ENCODE measurements at regions of chr6 and their contacts with region 1.

Region 1: GRCh38 chr6:110039364-110039980 is 61.4 kb downstream of the GPR6 start:
- DNase-seq: peak; percentile 92
- H3K4me3 ChIP-seq: peak overlapping the region in 1 of 3 experiments; percentile 14
- H3K27ac ChIP-seq: no peak overlapping the region
- H3K4me1 ChIP-seq: no peaks in the 10 kb centered on the region
- H3K27me3 ChIP-seq: peaks cover 4% of the 10 kb centered on the region in 2 experiments
- CTCF ChIP-seq: peak; percentile 84 to 89
- POLR2A ChIP-seq: no peak

Region 2: GRCh38 chr6:109595998-109596397 is 443.5 kb before region 1 on chr6:
- CTCF ChIA-PET with region 1: interaction called, 59 read pairs
- POLR2A ChIA-PET with region 1: no interaction called
- dilution Hi-C with region 1: no loop called
- intact Hi-C with region 1: loop called (anchors 1 kb)
- DNase-seq: peak; percentile 50
- H3K4me3 ChIP-seq: no peak overlapping the region
- H3K27ac ChIP-seq: no peak overlapping the region
- H3K4me1 ChIP-seq: no peaks in the 10 kb centered on the region
- H3K27me3 ChIP-seq: no peaks in the 10 kb centered on the region
- CTCF ChIP-seq: peak in 1 of 2 donors; percentile 51
- POLR2A ChIP-seq: no peak

Region 3: GRCh38 chr6:109705258-109705657 is 334.2 kb before region 1 on chr6:
- CTCF ChIA-PET with region 1: interaction called, 449 read pairs
- POLR2A ChIA-PET with region 1: interaction called, 5 read pairs
- dilution Hi-C with region 1: no loop called
- intact Hi-C with region 1: loop called (anchors 1 kb)
- DNase-seq: peak; percentile 90
- H3K4me3 ChIP-seq: no peak overlapping the region
- H3K27ac ChIP-seq: no peak overlapping the region
- H3K4me1 ChIP-seq: no peaks in the 10 kb centered on the region
- H3K27me3 ChIP-seq: no peaks in the 10 kb centered on the region
- CTCF ChIP-seq: peak; percentile 91 to 99
- POLR2A ChIP-seq: no peak

Region 4: DNA sequence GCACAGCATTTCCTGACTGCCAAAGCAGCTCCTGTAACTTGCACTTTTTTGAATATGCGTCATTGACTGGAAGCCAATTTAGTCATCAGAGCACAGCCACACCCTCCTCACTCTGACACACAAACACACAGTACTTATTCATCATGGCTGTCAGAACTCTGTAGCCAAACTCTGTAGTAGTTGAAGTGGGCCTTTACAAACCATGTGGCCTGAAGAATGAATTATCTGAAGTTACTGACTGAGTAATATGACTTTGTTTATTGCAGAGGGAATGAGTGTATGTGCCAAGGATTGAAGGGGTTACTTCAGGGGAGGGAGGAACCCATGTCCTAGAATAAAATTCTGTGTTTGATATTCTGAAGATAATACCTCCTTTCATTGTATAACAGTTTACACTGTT is 245.7 kb before region 1 on chr6:
- CTCF ChIA-PET with region 1: interaction called, 13 read pairs
- POLR2A ChIA-PET with region 1: no interaction called
- dilution Hi-C with region 1: no loop called
- intact Hi-C with region 1: no loop called
- DNase-seq: peak; percentile 93
- H3K4me3 ChIP-seq: no peak overlapping the region
- H3K27ac ChIP-seq: peak overlapping the region; percentile 75
- H3K4me1 ChIP-seq: peaks cover 38% of the 10 kb centered on the region
- H3K27me3 ChIP-seq: no peaks in the 10 kb centered on the region
- CTCF ChIP-seq: no peak
- POLR2A ChIP-seq: no peak

Region 5: GRCh38 chr6:110029144-110029543 is 10.3 kb before region 1 on chr6:
- CTCF ChIA-PET with region 1: interaction called, 37 read pairs
- POLR2A ChIA-PET with region 1: no interaction called
- dilution Hi-C with region 1: no loop called
- intact Hi-C with region 1: no loop called
- DNase-seq: no peak
- H3K4me3 ChIP-seq: no peak overlapping the region
- H3K27ac ChIP-seq: no peak overlapping the region
- H3K4me1 ChIP-seq: no peaks in the 10 kb centered on the region
- H3K27me3 ChIP-seq: peaks cover 0 to 3% of the 10 kb centered on the region in 2 experiments
- CTCF ChIP-seq: no peak
- POLR2A ChIP-seq: no peak

Region 6: DNA sequence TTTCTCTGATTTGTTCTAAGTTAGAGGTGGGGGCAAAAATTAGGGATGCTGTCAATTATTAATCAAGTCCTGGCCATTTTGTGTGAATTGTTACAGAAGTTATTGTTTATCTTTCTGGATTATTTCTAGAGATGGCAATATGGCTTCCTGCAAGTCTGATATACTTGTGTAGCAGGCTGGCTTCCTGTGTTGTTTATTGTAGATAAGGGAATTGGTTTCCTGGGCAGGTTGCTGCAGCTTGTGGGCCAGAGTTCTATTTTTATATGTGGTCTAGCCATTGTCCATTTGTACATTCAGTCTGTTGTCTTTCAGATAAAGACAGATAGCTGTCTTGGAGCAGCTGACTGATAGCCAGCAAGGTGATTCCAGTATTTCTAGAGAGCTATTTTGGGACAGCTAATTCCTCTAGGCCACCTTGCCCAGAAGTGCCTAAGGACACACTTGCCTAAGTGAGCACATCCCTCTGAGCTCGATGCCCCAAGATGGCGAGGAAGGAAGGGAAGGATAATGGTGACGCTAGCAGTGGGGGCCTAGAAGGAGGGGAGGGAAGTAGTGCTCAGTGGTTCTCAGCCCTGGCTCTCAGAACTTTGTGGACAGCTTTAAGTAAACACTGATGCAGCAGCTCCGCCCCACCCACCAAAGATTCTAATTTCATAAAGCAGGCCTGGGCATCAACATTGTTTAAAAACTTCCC is 350.4 kb after region 1 on chr6:
- CTCF ChIA-PET with region 1: interaction called, 192 read pairs
- POLR2A ChIA-PET with region 1: no interaction called
- dilution Hi-C with region 1: no loop called
- intact Hi-C with region 1: loop called (anchors 1 kb)
- DNase-seq: peak; percentile 74
- H3K4me3 ChIP-seq: no peak overlapping the region
- H3K27ac ChIP-seq: peak overlapping the region; percentile 54
- H3K4me1 ChIP-seq: peaks cover 17% of the 10 kb centered on the region
- H3K27me3 ChIP-seq: peaks cover 10 to 16% of the 10 kb centered on the region in 2 experiments
- CTCF ChIP-seq: no peak
- POLR2A ChIP-seq: no peak